ENCODE measurements at regions of chr2 and their contacts with region 1.

Region 1: DNA sequence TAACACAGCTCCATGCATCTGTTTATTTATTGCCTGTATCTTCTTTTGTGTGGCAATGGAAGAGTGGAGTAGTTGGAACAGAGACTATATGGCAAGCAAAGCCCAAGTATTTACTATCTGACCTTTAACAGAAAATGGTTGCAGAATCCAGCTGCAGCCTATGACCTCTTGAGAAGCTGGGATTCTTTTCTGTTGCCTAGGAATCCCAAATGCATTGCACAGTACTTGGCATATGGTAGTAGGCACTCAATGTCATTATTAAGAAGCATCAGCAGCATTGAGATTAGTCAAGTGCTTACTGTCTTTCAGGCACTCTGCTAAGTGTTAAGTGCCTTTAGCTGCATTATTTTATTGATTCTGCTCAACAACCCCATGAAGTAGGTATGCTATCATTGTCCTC is 331.6 kb downstream of the CCDC85A start:
- DNase-seq: no peak
- H3K4me3 ChIP-seq: no peak overlapping the region
- H3K4me3 Mint-ChIP-seq: no peak overlapping the region
- H3K27ac Mint-ChIP-seq: no peak overlapping the region
- H3K4me1 ChIP-seq: no peaks in the 10 kb centered on the region
- H3K4me1 Mint-ChIP-seq: no peaks in the 10 kb centered on the region
- H3K27me3 ChIP-seq: no peaks in the 10 kb centered on the region
- H3K27me3 Mint-ChIP-seq: no peaks in the 10 kb centered on the region
- CTCF ChIP-seq: no peak

Region 2: GRCh38 chr2:56502616-56503015 is 12.8 kb before region 1 on chr2:
- CTCF ChIA-PET with region 1: no interaction called
- POLR2A ChIA-PET with region 1: no interaction called
- intact Hi-C with region 1: loop called (anchors 1 kb)
- DNase-seq: no peak
- H3K4me3 ChIP-seq: no peak overlapping the region
- H3K4me3 Mint-ChIP-seq: no peak overlapping the region
- H3K27ac Mint-ChIP-seq: no peak overlapping the region
- H3K4me1 ChIP-seq: no peaks in the 10 kb centered on the region
- H3K4me1 Mint-ChIP-seq: no peaks in the 10 kb centered on the region
- H3K27me3 ChIP-seq: no peaks in the 10 kb centered on the region
- H3K27me3 Mint-ChIP-seq: peaks cover 2% of the 10 kb centered on the region
- CTCF ChIP-seq: no peak